CD8-positive, alpha-beta T cell (primary cell): ENCODE measurements at regions of chr7 and their contacts with region 1.

Region 1: GRCh38 chr7:39091774-39092173 is 114.1 kb downstream of the POU6F2 start:
- DNase-seq: no peak
- ATAC-seq: no peak
- H3K4me3 ChIP-seq: no peak overlapping the region
- H3K4me3 Mint-ChIP-seq: no peak overlapping the region
- H3K27ac ChIP-seq: no peak overlapping the region
- H3K27ac Mint-ChIP-seq: no peak overlapping the region
- H3K4me1 ChIP-seq: no peaks in the 10 kb centered on the region
- H3K4me1 Mint-ChIP-seq: no peaks in the 10 kb centered on the region
- H3K27me3 ChIP-seq: no peaks in the 10 kb centered on the region
- H3K27me3 Mint-ChIP-seq: no peaks in the 10 kb centered on the region
- CTCF ChIP-seq: no peak

Region 2: GRCh38 chr7:39051707-39052106 is 40.1 kb before region 1 on chr7:
- CTCF ChIA-PET with region 1: no interaction called
- POLR2A ChIA-PET with region 1: no interaction called
- intact Hi-C with region 1: loop called in 1 of 2 experiments (anchors 2 kb)
- DNase-seq: no peak
- ATAC-seq: no peak
- H3K4me3 ChIP-seq: no peak overlapping the region
- H3K4me3 Mint-ChIP-seq: no peak overlapping the region
- H3K27ac ChIP-seq: no peak overlapping the region
- H3K27ac Mint-ChIP-seq: no peak overlapping the region
- H3K4me1 ChIP-seq: no peaks in the 10 kb centered on the region
- H3K4me1 Mint-ChIP-seq: no peaks in the 10 kb centered on the region
- H3K27me3 ChIP-seq: no peaks in the 10 kb centered on the region
- H3K27me3 Mint-ChIP-seq: peaks cover 3% of the 10 kb centered on the region
- CTCF ChIP-seq: no peak